Ovary (tissue), 10 donors: ENCODE measurements at regions of chr12 and their contacts with region 1.

Region 1: GRCh38 chr12:94312378-94312777 is 147.3 kb downstream of the CEP83 start:
- DNase-seq: no peak
- H3K4me3 ChIP-seq: no peak overlapping the region
- H3K27ac ChIP-seq: no peak overlapping the region
- H3K4me1 ChIP-seq: no peaks in the 10 kb centered on the region
- H3K27me3 ChIP-seq: no peaks in the 10 kb centered on the region
- CTCF ChIP-seq: no peak
- EP300 ChIP-seq: no peak
- POLR2A ChIP-seq: no peak

Region 2: DNA sequence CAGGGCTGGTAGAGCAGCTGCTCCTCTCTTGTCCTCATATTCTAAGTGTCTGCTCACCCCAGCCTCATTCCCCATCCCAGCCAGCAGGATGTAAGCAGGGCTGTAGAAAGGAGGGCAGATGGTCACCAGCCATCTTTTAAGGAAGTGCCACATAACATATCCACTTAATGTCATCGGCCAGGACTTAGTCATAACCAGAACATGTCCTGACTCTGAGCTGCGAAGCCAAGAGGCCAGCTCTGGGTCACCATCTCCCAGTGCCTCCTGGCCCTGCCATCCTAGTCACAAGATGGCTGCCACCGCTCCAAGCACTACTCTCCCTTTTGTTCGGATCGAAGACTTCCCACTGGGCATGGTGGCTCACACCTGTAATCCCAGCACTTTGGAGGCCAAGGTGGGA is 40.1 kb before region 1 on chr12:
- intact Hi-C with region 1: loop called in 1 of 4 experiments (anchors 1 kb)
- DNase-seq: no peak
- H3K4me3 ChIP-seq: no peak overlapping the region
- H3K27ac ChIP-seq: no peak overlapping the region
- H3K4me1 ChIP-seq: peaks cover 1% of the 10 kb centered on the region
- H3K27me3 ChIP-seq: no peaks in the 10 kb centered on the region
- CTCF ChIP-seq: no peak
- EP300 ChIP-seq: no peak
- POLR2A ChIP-seq: no peak